SK-N-SH (cell line): ENCODE measurements at regions of chr2 and their contacts with region 1.

Region 1: DNA sequence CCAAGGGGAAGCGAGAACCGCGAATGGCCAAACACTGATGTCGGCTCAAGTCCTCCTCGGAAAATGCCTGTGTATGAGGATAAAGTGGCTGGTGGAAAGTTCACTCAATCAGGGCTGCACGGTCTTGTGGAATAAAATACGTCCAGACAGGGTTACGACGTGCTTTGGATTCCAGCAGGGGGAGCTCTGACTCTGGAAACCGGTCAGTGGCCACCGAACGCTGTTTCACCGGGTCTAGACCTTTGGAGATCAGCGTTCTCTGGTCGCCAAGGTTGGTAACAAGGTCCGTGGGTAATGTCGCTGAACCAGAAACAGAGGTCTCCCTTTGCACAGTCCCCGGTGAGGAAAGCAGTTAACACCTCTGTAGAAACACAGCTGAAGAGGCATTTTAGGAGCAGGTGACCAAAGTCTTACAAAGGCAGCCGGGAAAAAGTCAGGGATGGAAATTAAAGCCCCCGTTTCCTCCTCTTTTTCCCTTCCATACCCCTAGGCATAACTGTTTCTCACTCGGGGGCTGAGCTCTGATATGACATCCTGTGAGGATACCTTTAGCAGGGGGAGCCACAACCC is 47.8 kb downstream of the CDCA7 start:
- DNase-seq: peak; percentile 83
- H3K4me3 ChIP-seq: peak overlapping the region; percentile 29 to 55; a peak in 3 of 4 replicates
- H3K27ac ChIP-seq: no peak overlapping the region
- H3K4me1 ChIP-seq: peaks cover 0 to 7% of the 10 kb centered on the region in 2 experiments; a peak in 1 of 4 replicates
- H3K27me3 ChIP-seq: peaks cover 35% of the 10 kb centered on the region
- CTCF ChIP-seq: peak; percentile 89
- EP300 ChIP-seq: no peak
- RAD21 ChIP-seq: peak; percentile 97

Region 2: DNA sequence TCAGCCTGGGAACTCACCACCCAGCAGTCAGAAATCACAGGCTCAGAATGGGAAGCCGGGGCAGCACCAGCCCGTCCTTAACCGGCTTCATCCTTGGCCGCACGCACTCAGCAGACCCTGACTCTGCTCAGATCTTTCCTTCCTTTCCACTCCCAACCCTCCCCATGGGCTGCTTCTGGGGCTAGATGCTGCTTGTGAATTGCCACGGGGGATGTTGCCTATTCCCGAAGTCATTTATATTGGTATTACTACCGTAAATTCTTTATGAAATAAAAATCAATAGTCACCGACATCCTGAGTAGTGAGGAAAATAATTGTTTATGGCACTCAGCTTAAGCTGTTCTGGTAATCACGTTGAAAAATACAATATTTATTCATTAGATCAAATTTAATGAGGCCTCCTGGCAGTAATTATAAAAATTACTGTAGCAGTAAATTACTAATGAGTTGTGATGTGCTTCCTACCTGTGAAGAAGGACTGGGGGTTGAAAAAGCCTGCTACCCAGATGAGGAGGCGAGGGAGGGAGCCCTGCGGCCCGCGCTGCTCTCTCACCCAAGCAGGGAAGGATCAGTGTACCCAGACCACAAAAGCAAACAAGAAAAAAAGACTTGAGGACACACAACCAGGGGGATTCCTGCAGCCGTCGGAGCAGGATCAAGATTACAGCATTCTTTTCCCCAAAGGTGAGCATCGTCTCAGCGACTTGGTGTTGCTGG is 16.3 kb before region 1 on chr2:
- CTCF ChIA-PET with region 1: interaction called, 11 read pairs
- POLR2A ChIA-PET with region 1: no interaction called
- DNase-seq: no peak
- H3K4me3 ChIP-seq: no peak overlapping the region
- H3K27ac ChIP-seq: no peak overlapping the region
- H3K4me1 ChIP-seq: no peaks in the 10 kb centered on the region; a peak in 1 of 4 replicates
- H3K27me3 ChIP-seq: no peaks in the 10 kb centered on the region
- CTCF ChIP-seq: no peak
- EP300 ChIP-seq: no peak
- RAD21 ChIP-seq: no peak

Region 3: GRCh38 chr2:173414823-173415322 is 12.4 kb after region 1 on chr2:
- CTCF ChIA-PET with region 1: interaction called, 31 read pairs
- POLR2A ChIA-PET with region 1: no interaction called
- DNase-seq: no peak
- H3K4me3 ChIP-seq: no peak overlapping the region
- H3K27ac ChIP-seq: no peak overlapping the region
- H3K4me1 ChIP-seq: peaks cover 0 to 6% of the 10 kb centered on the region in 2 experiments; a peak in 2 of 4 replicates
- H3K27me3 ChIP-seq: no peaks in the 10 kb centered on the region; the same call in 1 of the 2 replicates
- CTCF ChIP-seq: no peak
- EP300 ChIP-seq: no peak
- RAD21 ChIP-seq: no peak

Region 4: GRCh38 chr2:173427887-173428600 is 25.6 kb after region 1 on chr2:
- CTCF ChIA-PET with region 1: interaction called, 14 read pairs
- POLR2A ChIA-PET with region 1: no interaction called
- DNase-seq: no peak
- H3K4me3 ChIP-seq: no peak overlapping the region
- H3K27ac ChIP-seq: no peak overlapping the region
- H3K4me1 ChIP-seq: no peaks in the 10 kb centered on the region; a peak in 1 of 4 replicates
- H3K27me3 ChIP-seq: no peaks in the 10 kb centered on the region; the same call in 1 of the 2 replicates
- CTCF ChIP-seq: no peak
- EP300 ChIP-seq: no peak
- RAD21 ChIP-seq: no peak

Region 5: GRCh38 chr2:173448938-173449471 is 46.5 kb after region 1 on chr2:
- CTCF ChIA-PET with region 1: interaction called, 63 read pairs
- POLR2A ChIA-PET with region 1: interaction called, 4 read pairs
- DNase-seq: peak; percentile 77
- H3K4me3 ChIP-seq: peak overlapping the region; percentile 43 to 55
- H3K27ac ChIP-seq: peak overlapping the region in 1 of 2 experiments; percentile 73; a peak in 2 of 4 replicates
- H3K4me1 ChIP-seq: peaks cover 0 to 3% of the 10 kb centered on the region in 2 experiments; a peak in 1 of 4 replicates
- H3K27me3 ChIP-seq: no peaks in the 10 kb centered on the region
- CTCF ChIP-seq: peak; percentile 73
- EP300 ChIP-seq: no peak
- RAD21 ChIP-seq: peak; percentile 72

Region 6: GRCh38 chr2:173568054-173568453 is 165.6 kb after region 1 on chr2:
- CTCF ChIA-PET with region 1: interaction called, 21 read pairs
- POLR2A ChIA-PET with region 1: no interaction called
- DNase-seq: peak; percentile 6
- H3K4me3 ChIP-seq: no peak overlapping the region
- H3K27ac ChIP-seq: no peak overlapping the region
- H3K4me1 ChIP-seq: peaks cover 0 to 2% of the 10 kb centered on the region in 2 experiments; a peak in 2 of 4 replicates
- H3K27me3 ChIP-seq: no peaks in the 10 kb centered on the region
- CTCF ChIP-seq: peak; percentile 32; the same call in 1 of the 2 replicates
- EP300 ChIP-seq: no peak
- RAD21 ChIP-seq: peak; percentile 43

Region 7: GRCh38 chr2:174341286-174341994 is 939.0 kb after region 1 on chr2:
- CTCF ChIA-PET with region 1: interaction called, 103 read pairs
- POLR2A ChIA-PET with region 1: no interaction called
- DNase-seq: peak; percentile 90
- H3K4me3 ChIP-seq: peak overlapping the region; percentile 24 to 34; a peak in 2 of 4 replicates
- H3K27ac ChIP-seq: no peak overlapping the region
- H3K4me1 ChIP-seq: peaks cover 0 to 27% of the 10 kb centered on the region in 2 experiments; a peak in 1 of 4 replicates
- H3K27me3 ChIP-seq: peaks cover 76% of the 10 kb centered on the region
- CTCF ChIP-seq: peak; percentile 99
- EP300 ChIP-seq: no peak
- RAD21 ChIP-seq: peak; percentile 96